Activated B cell treated with CpG ODN at 0.5 μM for 24 hours (primary cell): ENCODE measurements at regions of chr14 and their contacts with region 1.

Region 1: GRCh38 chr14:58297762-58298476 is 436 bp upstream of the ARID4A start:
- DNase-seq: peak; percentile 91
- ATAC-seq: peak; percentile 83
- H3K4me3 Mint-ChIP-seq: no peak overlapping the region
- H3K27ac Mint-ChIP-seq: no peak overlapping the region
- H3K4me1 Mint-ChIP-seq: peaks cover 50% of the 10 kb centered on the region
- H3K27me3 Mint-ChIP-seq: no peaks in the 10 kb centered on the region
- CTCF ChIP-seq: no peak

Region 2: GRCh38 chr14:57533214-57533613 is 764.7 kb before region 1 on chr14:
- CTCF ChIA-PET with region 1: no interaction called
- POLR2A ChIA-PET with region 1: no interaction called
- intact Hi-C with region 1: no loop called
- DNase-seq: no peak
- ATAC-seq: no peak
- H3K4me3 Mint-ChIP-seq: no peak overlapping the region
- H3K27ac Mint-ChIP-seq: no peak overlapping the region
- H3K4me1 Mint-ChIP-seq: no peaks in the 10 kb centered on the region
- H3K27me3 Mint-ChIP-seq: peaks cover 17% of the 10 kb centered on the region
- CTCF ChIP-seq: no peak

Region 3: DNA sequence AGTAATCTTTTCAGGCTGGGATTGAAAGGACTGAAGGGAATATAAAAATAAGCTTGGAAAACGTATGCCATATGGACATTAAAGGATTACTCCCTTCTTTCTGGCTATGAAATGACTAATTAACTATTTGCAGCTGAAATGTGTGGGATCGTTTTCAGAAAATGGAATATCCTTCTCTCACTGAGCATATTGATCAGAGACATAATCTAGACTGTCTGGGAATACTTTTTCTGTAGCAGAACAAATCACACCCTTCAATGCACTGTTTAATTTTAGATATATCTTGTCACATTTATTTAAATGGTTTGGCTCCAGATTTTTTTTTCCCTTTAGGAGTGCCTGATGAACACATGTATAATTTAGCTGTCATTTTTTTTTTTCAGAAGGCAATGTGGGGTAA is 108.7 kb before region 1 on chr14:
- CTCF ChIA-PET with region 1: no interaction called
- POLR2A ChIA-PET with region 1: no interaction called
- intact Hi-C with region 1: no loop called
- DNase-seq: no peak
- ATAC-seq: no peak
- H3K4me3 Mint-ChIP-seq: no peak overlapping the region
- H3K27ac Mint-ChIP-seq: no peak overlapping the region
- H3K4me1 Mint-ChIP-seq: no peaks in the 10 kb centered on the region
- H3K27me3 Mint-ChIP-seq: peaks cover 21% of the 10 kb centered on the region
- CTCF ChIP-seq: no peak

Region 4: GRCh38 chr14:58199726-58200479 is 98.0 kb before region 1 on chr14 and contains the start of gene ACTR10:
- CTCF ChIA-PET with region 1: no interaction called
- POLR2A ChIA-PET with region 1: interaction called, 19 read pairs
- intact Hi-C with region 1: loop called (anchors 1 kb)
- DNase-seq: peak; percentile 93
- ATAC-seq: peak; percentile 88
- H3K4me3 Mint-ChIP-seq: peak within 1 kb of the TSS; percentile 94
- H3K27ac Mint-ChIP-seq: peak within 1 kb of the TSS; percentile 93
- H3K4me1 Mint-ChIP-seq: peaks cover 28% of the 10 kb centered on the region
- H3K27me3 Mint-ChIP-seq: no peaks in the 10 kb centered on the region
- CTCF ChIP-seq: no peak
- total RNA-seq, gene ACTR10: 36.5 and 40.5 TPM in 2 replicates

Region 5: GRCh38 chr14:58244556-58245387 is 53.1 kb before region 1 on chr14 and contains the start of gene PSMA3:
- CTCF ChIA-PET with region 1: interaction called, 7 read pairs
- POLR2A ChIA-PET with region 1: interaction called, 56 read pairs
- intact Hi-C with region 1: loop called (anchors 1 kb)
- DNase-seq: peak; percentile 94
- ATAC-seq: peak; percentile 91
- H3K4me3 Mint-ChIP-seq: peak within 1 kb of the TSS; percentile 98
- H3K27ac Mint-ChIP-seq: peak within 1 kb of the TSS; percentile 98
- H3K4me1 Mint-ChIP-seq: peaks cover 51% of the 10 kb centered on the region
- H3K27me3 Mint-ChIP-seq: peaks cover 1% of the 10 kb centered on the region
- CTCF ChIP-seq: no peak
- total RNA-seq, gene PSMA3: 204 and 208 TPM in 2 replicates

Region 6: DNA sequence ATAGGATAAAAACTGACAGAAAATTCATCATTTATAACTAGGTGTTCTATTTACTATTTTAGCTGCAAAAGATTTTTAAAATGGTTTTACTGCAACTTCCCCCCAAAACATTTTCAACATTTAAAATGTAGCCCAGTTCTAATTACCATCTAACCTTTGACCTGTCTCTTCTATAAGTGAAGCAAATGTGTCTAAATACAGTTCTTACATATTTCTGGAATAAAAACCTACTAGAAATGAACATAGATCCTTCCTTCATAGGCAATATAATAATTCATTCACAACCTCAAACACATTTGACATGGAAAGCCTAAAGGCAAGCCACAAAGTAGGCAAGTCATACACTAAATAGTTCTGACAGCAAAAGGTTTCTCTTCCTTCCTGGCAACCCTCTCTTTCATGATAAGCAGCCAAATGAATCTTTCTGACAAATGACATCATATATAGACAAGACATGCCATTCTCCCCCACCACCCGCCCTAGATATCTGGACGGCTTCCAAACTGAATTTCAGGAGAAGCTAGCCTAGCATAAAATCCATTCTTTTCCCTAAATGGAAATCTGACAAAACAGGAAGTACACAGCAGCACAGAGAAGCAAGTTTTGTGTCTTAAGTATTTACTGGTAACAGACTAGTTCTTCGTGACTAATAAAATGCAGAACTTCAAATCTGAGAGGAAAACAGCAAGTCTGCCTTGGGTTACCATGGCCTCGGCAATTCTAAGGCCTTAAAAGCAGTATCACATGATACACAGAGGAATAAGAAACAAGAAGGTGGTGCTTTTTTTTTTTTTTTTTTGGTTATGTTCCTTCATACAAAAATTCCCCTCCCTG is 16.7 kb before region 1 on chr14:
- CTCF ChIA-PET with region 1: no interaction called
- POLR2A ChIA-PET with region 1: interaction called, 14 read pairs
- intact Hi-C with region 1: loop called (anchors 1 kb)
- DNase-seq: no peak
- ATAC-seq: peak; percentile 90
- H3K4me3 Mint-ChIP-seq: peak overlapping the region; percentile 71
- H3K27ac Mint-ChIP-seq: peak overlapping the region; percentile 95
- H3K4me1 Mint-ChIP-seq: peaks cover 34% of the 10 kb centered on the region
- H3K27me3 Mint-ChIP-seq: no peaks in the 10 kb centered on the region
- CTCF ChIP-seq: no peak

Region 7: DNA sequence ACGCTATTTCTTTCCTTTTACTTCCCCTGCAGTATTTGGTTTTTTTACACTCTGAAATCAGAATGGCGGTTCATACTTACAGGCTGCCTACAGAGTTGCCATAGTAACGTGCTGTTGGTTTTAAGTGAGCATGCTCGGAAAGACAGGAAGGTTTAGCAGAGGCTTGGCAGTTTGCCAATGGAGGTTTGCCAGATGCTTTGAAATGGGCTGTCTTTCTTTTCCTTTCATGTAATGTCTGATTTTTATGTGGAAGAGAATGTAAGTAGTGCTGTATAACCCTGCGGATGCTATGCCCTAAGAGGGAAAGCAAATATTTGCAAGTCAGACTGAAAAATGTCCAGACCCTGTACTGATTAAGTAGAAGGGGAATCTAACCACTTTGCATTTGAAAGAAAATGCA is 33.2 kb after region 1 on chr14:
- CTCF ChIA-PET with region 1: no interaction called
- POLR2A ChIA-PET with region 1: interaction called, 4 read pairs
- intact Hi-C with region 1: loop called (anchors 1 kb)
- DNase-seq: peak; percentile 26
- ATAC-seq: peak; percentile 98
- H3K4me3 Mint-ChIP-seq: peak overlapping the region; percentile 28
- H3K27ac Mint-ChIP-seq: peak overlapping the region; percentile 81
- H3K4me1 Mint-ChIP-seq: peaks cover 13% of the 10 kb centered on the region
- H3K27me3 Mint-ChIP-seq: no peaks in the 10 kb centered on the region
- CTCF ChIP-seq: no peak

Region 8: DNA sequence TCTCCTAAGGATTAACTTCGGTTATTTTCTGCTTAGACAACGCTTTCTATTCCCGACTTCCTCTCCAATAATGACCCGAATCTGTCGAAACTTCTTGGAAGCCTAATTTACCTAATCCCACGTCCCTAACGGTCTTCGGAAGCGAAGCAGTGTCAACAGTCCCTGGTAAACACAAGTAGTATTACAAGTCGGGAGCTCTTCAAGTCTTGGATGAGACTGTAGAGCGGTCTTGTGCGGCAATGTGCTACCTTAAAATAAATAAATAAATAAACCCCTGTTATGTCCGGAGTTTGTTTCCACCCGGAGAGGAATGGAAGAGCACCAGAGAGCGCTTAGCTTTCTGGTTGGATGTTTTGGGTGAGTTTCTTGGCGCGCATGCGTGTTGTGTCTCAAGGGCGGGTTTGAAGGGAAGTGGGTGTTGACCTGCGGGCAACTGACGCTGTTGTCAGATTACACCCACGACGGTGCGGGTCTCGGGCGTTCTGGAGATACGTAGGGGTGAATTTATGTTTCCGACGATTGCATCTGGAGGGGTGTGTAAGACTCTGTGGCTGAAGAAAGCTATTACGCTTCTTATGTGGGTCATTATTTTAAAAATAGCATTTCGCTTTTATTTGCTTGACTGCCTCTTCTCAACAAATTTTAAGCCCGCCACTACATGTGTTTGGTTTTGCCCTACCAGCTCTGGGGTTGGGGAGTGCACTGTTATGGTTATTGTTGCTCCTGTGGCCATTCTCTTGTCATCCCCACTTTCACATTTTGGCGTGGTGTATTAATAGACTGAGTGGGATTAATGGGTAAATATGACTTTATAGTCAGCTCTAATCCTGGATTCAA is 129.6 kb after region 1 on chr14 and contains the starts of genes KIAA0586 and TIMM9:
- CTCF ChIA-PET with region 1: no interaction called
- POLR2A ChIA-PET with region 1: interaction called, 51 read pairs
- intact Hi-C with region 1: loop called (anchors 1 kb)
- DNase-seq: peak; percentile 85
- ATAC-seq: peak; percentile 93
- H3K4me3 Mint-ChIP-seq: peak within 1 kb of the TSS; percentile 94
- H3K27ac Mint-ChIP-seq: peak within 1 kb of the TSS; percentile 97
- H3K4me1 Mint-ChIP-seq: peaks cover 46% of the 10 kb centered on the region
- H3K27me3 Mint-ChIP-seq: no peaks in the 10 kb centered on the region
- CTCF ChIP-seq: no peak
- total RNA-seq, gene KIAA0586: 18.3 and 19.8 TPM in 2 replicates
- total RNA-seq, gene TIMM9: 29.1 and 35.7 TPM in 2 replicates

Region 9: DNA sequence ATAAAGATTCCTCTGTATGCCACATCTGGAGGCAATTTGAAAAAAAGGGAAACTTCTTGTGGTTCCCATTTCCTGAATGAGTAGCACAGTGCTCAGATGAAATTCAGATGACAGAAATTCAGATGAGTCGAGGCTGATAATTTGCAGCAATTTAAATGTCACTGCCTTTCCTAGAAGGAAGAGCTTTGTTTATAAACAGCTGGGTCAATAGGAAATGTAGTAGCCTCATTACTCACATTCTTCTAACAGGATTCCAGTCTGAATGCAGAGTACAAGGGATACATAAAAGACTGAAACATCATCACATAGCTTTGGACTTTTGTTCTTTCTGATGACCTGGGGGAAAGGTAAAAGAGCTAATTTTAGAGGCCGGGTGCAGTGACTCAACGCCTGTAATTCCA is 328.5 kb after region 1 on chr14:
- CTCF ChIA-PET with region 1: no interaction called
- POLR2A ChIA-PET with region 1: no interaction called
- intact Hi-C with region 1: no loop called
- DNase-seq: no peak
- ATAC-seq: no peak
- H3K4me3 Mint-ChIP-seq: no peak overlapping the region
- H3K27ac Mint-ChIP-seq: no peak overlapping the region
- H3K4me1 Mint-ChIP-seq: no peaks in the 10 kb centered on the region
- H3K27me3 Mint-ChIP-seq: no peaks in the 10 kb centered on the region
- CTCF ChIP-seq: no peak